HEK293 (cell line): ENCODE measurements at regions of chr17 and their contacts with region 1.

Region 1: DNA sequence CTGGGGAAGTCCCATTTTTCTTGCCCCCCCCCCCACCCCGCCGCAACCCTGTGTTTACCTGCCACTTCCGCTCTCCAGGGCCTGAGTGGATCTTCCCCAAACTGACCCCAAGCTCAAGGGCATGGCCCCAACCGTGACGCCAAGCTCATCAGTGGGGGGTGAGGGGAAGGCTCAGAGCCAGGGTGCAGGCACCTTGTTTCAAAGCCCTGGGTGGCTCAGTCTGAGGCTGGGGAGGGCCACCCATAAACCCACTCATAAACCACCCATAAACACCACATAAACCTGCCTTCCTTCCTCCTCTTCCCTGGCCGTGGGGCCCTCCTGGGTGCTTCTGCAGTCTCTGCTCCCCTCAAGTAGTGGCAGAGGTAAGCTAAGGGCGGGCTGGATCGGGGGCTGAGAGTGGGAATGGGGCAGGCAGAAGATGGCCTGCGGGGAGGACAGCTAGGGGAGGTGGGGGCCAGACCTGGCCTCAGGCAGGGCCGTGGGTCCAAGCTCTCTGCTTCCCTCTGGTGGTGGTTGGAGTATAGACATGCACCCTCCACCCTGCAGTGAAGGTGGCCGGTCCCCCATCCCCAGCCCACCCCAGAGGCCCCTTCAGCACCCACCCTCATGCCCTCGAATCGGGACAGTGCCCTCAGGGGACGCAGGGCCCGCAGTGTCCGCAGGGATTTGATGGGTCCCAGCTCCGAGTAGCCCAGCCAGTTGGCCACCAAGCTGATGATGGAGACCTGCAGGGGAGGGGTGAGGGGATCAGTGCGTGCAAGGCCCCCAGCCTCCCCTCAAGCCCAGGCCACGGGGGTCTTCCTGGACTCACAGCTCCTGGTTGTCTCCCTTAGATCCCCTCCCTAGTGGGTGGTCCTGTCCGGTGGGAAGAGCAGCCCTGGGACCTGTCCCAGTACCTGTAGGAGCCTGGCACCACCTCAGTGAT is 14.6 kb upstream of the CD79B start:
- H3K4me3 ChIP-seq: no peak overlapping the region
- H3K27ac ChIP-seq: no peak overlapping the region
- H3K4me1 ChIP-seq: no peaks in the 10 kb centered on the region
- CTCF ChIP-seq: peak; percentile 53; the same call in 1 of the 2 replicates

Region 2: DNA sequence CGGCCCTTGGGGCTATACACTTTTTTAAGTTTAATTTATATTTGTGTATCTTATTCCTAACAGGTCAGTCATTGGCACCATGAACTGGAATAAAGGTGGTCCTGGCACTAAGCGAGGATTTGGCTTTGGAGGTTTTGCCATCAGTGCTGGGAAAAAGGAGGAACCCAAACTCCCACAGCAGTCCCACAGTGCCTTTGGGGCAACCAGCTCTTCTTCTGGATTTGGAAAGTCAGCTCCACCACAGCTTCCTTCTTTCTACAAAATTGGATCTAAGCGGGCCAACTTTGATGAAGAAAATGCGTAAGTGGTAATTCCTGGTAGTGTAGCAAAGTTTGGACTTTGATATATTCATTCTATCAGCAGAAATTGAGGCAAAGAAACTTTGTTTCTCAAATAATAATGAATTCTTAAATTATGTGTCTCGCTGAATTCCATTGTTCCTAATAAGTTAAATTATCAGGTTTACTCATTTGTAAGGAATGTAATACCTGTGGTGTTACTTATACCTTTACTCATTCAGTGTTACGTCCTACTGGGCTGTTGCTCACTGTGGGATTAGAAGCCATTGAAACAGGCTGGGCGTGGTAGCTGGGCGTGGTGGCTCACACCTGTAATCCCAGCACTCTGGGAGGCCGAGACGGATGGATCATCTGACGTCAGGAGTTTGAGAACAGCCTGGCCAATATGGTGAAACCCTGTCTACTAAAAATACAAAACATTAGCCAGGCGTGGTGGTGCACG is 159.6 kb before region 1 on chr17:
- CTCF ChIA-PET with region 1: no interaction called
- POLR2A ChIA-PET with region 1: no interaction called
- H3K4me3 ChIP-seq: no peak overlapping the region
- H3K27ac ChIP-seq: 0 out of 2 replicates have a peak overlapping the region, but pooled peaks have one; percentile 31
- H3K4me1 ChIP-seq: no peaks in the 10 kb centered on the region; the same call in 1 of the 2 replicates
- CTCF ChIP-seq: no peak

Region 3: DNA sequence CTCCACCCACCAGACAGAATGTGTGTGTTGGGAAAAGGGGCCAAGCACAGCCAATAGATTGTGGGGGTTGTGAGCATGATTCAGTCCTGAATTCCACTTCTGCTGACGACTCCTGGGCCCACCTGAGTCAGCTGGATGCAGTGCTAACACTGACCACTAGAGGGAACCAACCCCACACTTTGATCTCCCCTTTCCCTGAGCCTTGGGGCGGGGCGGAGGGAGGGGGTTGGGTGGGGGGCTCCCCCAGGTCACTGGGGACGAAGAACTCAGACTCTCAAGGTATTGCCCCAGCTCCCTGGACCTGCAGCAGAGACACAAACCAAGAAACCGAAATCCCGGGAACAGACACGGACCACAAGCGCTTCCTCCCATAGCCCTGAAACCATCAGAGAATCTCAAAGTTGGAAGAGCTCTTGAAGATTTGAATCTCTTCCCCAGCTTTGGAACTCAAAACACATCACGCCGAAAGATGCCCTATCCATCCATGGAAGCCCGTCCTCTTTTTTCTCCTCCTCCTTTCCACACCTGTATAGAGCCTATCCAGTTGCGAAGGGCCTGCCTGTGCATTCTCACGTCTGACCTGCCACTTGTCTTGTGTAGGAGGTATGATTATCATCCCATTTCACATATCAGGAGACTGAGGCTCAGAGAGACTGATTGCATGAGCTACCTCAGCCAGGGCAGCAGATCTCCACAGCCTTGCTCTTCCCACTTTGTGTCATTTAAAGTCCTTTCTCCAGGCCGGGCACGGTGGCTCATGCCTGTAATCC is 34.9 kb before region 1 on chr17:
- CTCF ChIA-PET with region 1: interaction called, 14 read pairs
- POLR2A ChIA-PET with region 1: no interaction called
- H3K4me3 ChIP-seq: no peak overlapping the region
- H3K27ac ChIP-seq: no peak overlapping the region
- H3K4me1 ChIP-seq: no peaks in the 10 kb centered on the region
- CTCF ChIP-seq: no peak

Region 4: GRCh38 chr17:63919311-63919723 is 27.4 kb before region 1 on chr17:
- CTCF ChIA-PET with region 1: interaction called, 34 read pairs
- POLR2A ChIA-PET with region 1: interaction called, 3 read pairs
- H3K4me3 ChIP-seq: no peak overlapping the region
- H3K27ac ChIP-seq: no peak overlapping the region
- H3K4me1 ChIP-seq: no peaks in the 10 kb centered on the region
- CTCF ChIP-seq: peak; percentile 38; the same call in 1 of the 2 replicates

Region 5: GRCh38 chr17:63931099-63931561 is 15.6 kb before region 1 on chr17:
- CTCF ChIA-PET with region 1: interaction called, 14 read pairs
- POLR2A ChIA-PET with region 1: no interaction called
- H3K4me3 ChIP-seq: no peak overlapping the region
- H3K27ac ChIP-seq: no peak overlapping the region
- H3K4me1 ChIP-seq: no peaks in the 10 kb centered on the region
- CTCF ChIP-seq: no peak

Region 6: DNA sequence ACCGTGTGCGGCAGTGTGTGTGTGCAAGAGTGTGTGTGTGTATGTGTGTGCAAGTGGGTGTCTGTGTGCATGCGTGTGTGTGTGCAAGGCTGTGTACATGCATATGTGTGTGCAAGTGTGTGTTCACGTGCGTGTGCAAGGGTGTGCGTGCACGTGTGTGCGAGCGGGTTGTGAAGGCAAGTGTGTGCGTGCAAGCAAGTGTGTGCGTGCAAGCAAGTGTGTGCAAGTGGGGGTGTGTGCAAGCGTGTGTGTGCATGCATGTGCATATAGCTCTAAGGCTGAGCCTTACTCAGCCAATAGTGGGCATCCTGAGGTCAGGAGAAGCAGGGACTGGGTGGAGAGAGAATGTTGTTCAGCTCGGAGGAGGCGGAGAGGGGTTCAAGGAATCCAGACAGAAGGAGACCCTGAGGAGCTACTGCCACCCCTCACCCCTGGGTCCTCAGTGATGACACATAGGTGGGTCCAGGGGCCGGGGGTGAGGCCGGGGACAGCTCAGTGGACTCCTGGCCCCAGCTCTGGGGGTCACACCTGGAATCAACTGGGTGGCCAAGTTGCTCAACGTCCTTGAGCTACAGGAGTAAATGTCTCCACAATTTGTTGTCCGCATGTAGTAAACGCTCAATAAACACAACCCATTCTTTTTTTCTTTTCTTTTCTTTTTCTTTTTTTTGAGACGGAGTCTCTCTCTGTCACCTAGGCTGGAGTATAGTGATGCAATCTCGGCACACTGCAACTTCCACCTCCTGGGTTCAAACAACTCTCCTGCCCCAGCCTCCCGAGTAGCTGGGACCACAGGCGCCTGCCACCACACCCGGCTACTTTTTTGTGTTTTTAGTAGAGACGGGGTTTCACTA is 53.2 kb after region 1 on chr17:
- CTCF ChIA-PET with region 1: no interaction called
- POLR2A ChIA-PET with region 1: no interaction called
- H3K4me3 ChIP-seq: no peak overlapping the region
- H3K27ac ChIP-seq: no peak overlapping the region
- H3K4me1 ChIP-seq: no peaks in the 10 kb centered on the region
- CTCF ChIP-seq: no peak